Activated T-helper 2 cell treated with anti-CD3 and anti-CD28 coated beads, Interferon-gamma antibody, Interleukin-2, Interleukin-4, amounts not matched to agents 10 μg/mL and 5 μg/mL and 100 μg/mL, durations not matched to agents 14 hours and 24 hours and 36 hours (primary cell): ENCODE measurements at regions of chr9 and their contacts with region 1.

Region 1: GRCh38 chr9:129641746-129642513 is at the start of gene ASB6:
- DNase-seq: peak; percentile 93
- H3K4me3 Mint-ChIP-seq: peak within 1 kb of the TSS; percentile 87
- H3K27ac Mint-ChIP-seq: peak within 1 kb of the TSS; percentile 82
- H3K4me1 Mint-ChIP-seq: peaks cover 14% of the 10 kb centered on the region
- H3K27me3 Mint-ChIP-seq: no peaks in the 10 kb centered on the region
- total RNA-seq, gene ASB6: 21.4 and 22.1 TPM in 2 replicates

Region 2: DNA sequence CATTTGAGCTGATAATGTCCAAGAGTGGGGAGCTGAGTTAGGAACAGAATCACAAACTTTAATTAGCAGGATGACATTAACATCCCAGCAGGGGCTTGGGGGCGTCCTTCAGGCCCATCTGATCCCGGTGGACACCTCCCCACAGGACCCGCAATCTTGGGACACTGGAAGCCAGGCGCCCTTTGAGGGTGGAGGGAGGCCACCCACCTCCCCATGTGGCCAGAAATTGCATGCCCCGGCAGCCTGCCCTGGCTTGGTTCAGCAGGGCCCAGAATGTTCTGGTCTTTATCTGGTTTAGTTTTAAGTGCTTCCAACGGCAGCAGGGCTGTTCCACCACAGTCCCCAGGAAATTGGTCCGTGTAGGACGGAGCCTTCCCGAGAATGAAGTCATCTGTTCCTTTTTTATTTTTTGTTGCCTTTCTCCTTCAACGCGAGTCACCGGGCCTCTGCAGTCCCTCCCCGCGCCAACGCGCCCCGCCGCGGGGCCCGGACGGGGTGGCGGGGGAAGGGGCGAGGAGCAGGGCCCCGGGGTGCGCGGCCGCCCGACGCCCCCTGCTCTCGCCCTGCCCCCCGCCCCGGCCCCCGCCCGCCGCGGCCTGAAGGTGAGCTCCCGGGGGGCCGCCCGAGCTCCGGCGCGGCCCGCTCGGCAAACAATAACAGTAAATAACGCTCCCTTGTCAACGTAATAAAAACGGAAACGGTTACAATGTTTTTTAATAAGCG is 229.0 kb before region 1 on chr9:
- intact Hi-C with region 1: no loop called
- DNase-seq: peak; percentile 49
- H3K4me3 Mint-ChIP-seq: peak overlapping the region; percentile 60
- H3K27ac Mint-ChIP-seq: peak overlapping the region; percentile 96
- H3K4me1 Mint-ChIP-seq: peaks cover 6% of the 10 kb centered on the region
- H3K27me3 Mint-ChIP-seq: no peaks in the 10 kb centered on the region

Region 3: GRCh38 chr9:129626079-129626624 is 15.8 kb before region 1 on chr9 and contains the start of gene NTMT1:
- intact Hi-C with region 1: loop called (anchors 1 kb)
- DNase-seq: peak; percentile 88
- H3K4me3 Mint-ChIP-seq: peak within 1 kb of the TSS; percentile 85
- H3K27ac Mint-ChIP-seq: peak within 1 kb of the TSS; percentile 96
- H3K4me1 Mint-ChIP-seq: peaks cover 45% of the 10 kb centered on the region
- H3K27me3 Mint-ChIP-seq: peaks cover 5% of the 10 kb centered on the region
- total RNA-seq, gene NTMT1: 58.4 and 61.5 TPM in 2 replicates

Region 4: DNA sequence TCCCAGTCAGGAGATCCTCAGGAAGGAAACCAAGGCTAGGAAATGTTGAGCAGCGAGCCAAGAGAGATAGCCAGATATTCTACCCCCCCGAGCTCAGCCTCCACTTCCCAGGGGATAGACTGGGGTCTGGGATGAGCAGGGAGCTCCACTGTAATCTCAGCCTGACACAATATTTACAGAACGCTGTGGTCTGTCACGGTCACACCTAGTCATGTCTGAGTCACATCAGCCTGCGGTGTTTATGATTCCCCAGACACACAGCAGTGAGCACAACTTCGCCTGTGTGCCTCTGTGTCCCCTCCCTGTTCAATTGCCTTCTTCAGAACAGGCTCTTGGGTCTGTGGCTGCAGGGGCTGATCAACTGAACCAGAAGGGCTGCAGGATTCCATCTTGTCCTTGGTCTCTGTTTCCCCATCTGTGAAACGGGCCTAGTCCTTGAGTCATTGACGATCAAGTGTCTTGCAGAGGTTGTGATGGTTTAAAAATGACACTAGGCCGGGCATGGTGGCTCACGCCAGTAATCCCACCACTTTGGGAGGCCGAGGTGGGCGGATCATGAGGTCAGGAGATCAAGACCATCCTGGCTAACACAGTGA is 15.0 kb after region 1 on chr9:
- intact Hi-C with region 1: no loop called
- DNase-seq: no peak
- H3K4me3 Mint-ChIP-seq: no peak overlapping the region
- H3K27ac Mint-ChIP-seq: no peak overlapping the region
- H3K4me1 Mint-ChIP-seq: no peaks in the 10 kb centered on the region
- H3K27me3 Mint-ChIP-seq: peaks cover 11% of the 10 kb centered on the region

Region 5: DNA sequence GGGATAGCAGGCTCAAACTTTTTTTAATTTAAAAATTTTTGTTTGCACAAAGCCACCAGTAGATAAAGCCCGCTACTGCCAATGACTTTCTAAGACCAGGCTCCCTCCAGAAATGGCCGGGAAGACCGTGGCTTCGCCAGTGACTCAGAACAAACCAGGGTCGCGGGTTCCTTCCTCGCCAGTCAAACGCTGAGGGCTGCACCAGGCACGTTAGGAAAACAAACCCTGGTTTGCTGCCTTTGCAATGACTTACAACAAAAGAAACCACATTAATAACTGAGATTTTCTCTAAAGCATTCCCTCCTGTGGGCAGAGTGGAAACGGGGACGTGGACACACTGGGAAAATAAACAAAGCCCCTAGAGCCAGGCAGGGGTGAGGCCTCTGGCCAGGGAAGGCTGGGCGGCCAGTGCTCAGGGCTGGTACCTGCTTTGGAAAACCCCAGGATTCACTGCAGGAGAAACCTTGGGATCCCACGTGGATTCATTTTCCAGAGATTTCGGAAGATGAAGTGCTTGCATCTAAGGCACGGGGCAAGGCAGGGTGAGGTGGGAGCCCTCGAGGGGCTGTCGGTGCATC is 27.3 kb after region 1 on chr9:
- intact Hi-C with region 1: loop called (anchors 2 kb)
- DNase-seq: no peak
- H3K4me3 Mint-ChIP-seq: no peak overlapping the region
- H3K27ac Mint-ChIP-seq: no peak overlapping the region
- H3K4me1 Mint-ChIP-seq: peaks cover 13% of the 10 kb centered on the region
- H3K27me3 Mint-ChIP-seq: peaks cover 13% of the 10 kb centered on the region

Region 6: GRCh38 chr9:129685220-129685932 is 43.4 kb after region 1 on chr9:
- intact Hi-C with region 1: no loop called
- DNase-seq: no peak
- H3K4me3 Mint-ChIP-seq: no peak overlapping the region
- H3K27ac Mint-ChIP-seq: no peak overlapping the region
- H3K4me1 Mint-ChIP-seq: no peaks in the 10 kb centered on the region
- H3K27me3 Mint-ChIP-seq: no peaks in the 10 kb centered on the region

Region 7: DNA sequence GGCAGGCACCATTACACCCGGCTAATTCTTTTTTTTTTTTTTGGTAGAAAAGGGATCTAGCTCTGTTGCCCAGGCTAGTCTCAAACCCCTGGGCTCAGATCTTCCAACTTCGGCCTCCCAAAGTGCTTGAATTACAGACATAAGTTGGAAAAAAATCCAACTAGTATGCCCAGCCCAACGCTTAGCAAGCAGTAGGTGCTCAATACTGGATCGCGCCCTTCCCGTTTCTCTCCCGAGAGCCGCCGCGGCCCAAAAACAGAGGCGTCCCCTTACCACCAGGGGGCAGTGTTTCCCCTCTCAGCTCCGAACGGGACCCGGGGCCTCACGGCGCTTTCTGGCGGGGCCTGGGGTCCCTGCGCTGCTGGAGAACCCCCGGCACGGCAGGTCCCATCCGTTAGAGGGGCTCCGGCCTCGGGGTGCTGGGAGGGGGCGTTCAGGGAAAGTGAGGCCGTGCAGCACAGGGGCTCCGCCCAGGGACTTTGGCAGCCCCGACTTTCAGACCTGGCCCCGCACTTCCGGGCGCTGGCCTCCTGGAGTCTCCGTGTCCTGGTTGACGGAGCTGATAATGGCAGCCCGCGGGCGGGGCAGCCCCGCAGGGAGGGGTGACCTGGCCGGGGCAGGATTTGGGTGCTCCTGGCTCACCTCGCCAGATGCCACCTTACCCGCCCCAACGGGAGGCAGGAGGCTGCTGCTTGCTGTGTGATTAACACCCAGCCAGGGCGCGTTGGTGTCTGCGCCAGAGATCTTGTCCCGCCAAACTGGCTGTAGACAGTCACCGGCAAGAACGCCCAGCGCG is 95.7 kb after region 1 on chr9:
- intact Hi-C with region 1: loop called (anchors 5 kb)
- DNase-seq: peak; percentile 81
- H3K4me3 Mint-ChIP-seq: peak overlapping the region; percentile 68
- H3K27ac Mint-ChIP-seq: peak overlapping the region; percentile 52
- H3K4me1 Mint-ChIP-seq: peaks cover 6% of the 10 kb centered on the region
- H3K27me3 Mint-ChIP-seq: peaks cover 4% of the 10 kb centered on the region

Region 8: GRCh38 chr9:129783516-129784361 is 141.8 kb after region 1 on chr9:
- intact Hi-C with region 1: loop called (anchors 2 kb)
- DNase-seq: peak; percentile 63
- H3K4me3 Mint-ChIP-seq: no peak overlapping the region
- H3K27ac Mint-ChIP-seq: no peak overlapping the region
- H3K4me1 Mint-ChIP-seq: peaks cover 4% of the 10 kb centered on the region
- H3K27me3 Mint-ChIP-seq: peaks cover 14% of the 10 kb centered on the region

Region 9: GRCh38 chr9:129863059-129863690 is 221.2 kb after region 1 on chr9:
- intact Hi-C with region 1: no loop called
- DNase-seq: peak; percentile 79
- H3K4me3 Mint-ChIP-seq: peak overlapping the region; percentile 66
- H3K27ac Mint-ChIP-seq: peak overlapping the region; percentile 91
- H3K4me1 Mint-ChIP-seq: peaks cover 67% of the 10 kb centered on the region
- H3K27me3 Mint-ChIP-seq: no peaks in the 10 kb centered on the region